ENCODE measurements at regions of chr22 and their contacts with region 1.

Region 1: GRCh38 chr22:31970490-31971444 is 26.4 kb downstream of the YWHAH start:
- DNase-seq: peak; percentile 77 to 93 (median 92)
- ATAC-seq: peak; percentile 95
- H3K4me3 ChIP-seq: peak overlapping the region; percentile 21
- H3K27ac ChIP-seq: no peak overlapping the region
- H3K4me1 ChIP-seq: no peaks in the 10 kb centered on the region
- H3K27me3 ChIP-seq: no peaks in the 10 kb centered on the region

Region 2: DNA sequence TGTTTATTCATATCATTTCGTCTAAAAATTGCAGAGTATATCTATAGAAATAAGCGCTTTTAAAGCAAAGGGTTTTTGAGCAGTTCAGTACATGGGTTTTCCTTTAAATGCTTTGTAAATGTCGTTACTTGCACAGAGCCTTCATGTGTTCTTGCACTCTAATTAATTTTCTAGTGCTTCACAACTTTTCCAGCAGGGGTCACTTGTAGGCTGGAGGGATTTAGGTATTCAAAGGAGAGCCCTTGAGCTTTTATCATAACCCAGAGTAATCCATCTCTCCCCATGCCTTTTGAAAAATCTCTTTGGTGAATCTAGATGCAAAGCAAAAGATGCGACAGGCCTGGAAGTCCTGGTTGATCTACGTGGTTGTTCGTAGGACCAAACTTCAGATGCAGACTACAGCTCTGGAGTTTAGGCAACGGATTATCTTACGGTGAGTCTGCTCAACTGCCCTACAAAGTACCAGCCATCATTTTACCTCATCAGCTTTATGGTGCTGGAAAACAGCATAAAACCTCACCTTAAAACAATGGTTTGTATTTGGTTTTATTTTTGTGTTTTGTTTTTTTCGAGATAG is 414.1 kb before region 1 on chr22:
- intact Hi-C with region 1: loop called in 1 of 4 experiments (anchors 10 kb)
- DNase-seq: no peak
- ATAC-seq: peak; percentile 40 to 41
- H3K4me3 ChIP-seq: no peak overlapping the region
- H3K27ac ChIP-seq: no peak overlapping the region
- H3K4me1 ChIP-seq: no peaks in the 10 kb centered on the region
- H3K27me3 ChIP-seq: no peaks in the 10 kb centered on the region

Region 3: DNA sequence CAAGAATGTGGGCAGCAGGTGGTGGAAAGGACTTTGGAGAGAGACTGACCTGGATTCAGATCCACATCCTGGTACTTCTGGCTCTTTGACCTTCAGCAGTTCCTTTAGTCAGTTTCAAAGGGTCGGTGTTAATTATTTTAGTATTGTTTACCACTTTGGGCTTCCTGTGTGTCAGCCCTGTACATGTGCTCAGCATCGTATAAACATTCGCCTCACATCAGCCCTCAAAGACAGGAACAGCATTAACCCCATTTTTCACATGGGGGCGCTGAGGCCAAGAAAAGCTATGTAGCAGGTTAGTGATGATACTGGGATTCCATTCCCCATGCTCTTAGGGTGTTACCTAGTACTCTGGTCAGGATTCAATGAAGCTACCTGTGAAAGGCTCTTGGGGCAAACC is 98.6 kb before region 1 on chr22:
- intact Hi-C with region 1: loop called in 2 of 4 experiments (anchors 5 to 10 kb)
- DNase-seq: no peak
- ATAC-seq: peak in 1 of 2 donors; percentile 26
- H3K4me3 ChIP-seq: no peak overlapping the region
- H3K27ac ChIP-seq: no peak overlapping the region
- H3K4me1 ChIP-seq: no peaks in the 10 kb centered on the region
- H3K27me3 ChIP-seq: no peaks in the 10 kb centered on the region

Region 4: GRCh38 chr22:32080904-32081303 is 110.1 kb after region 1 on chr22:
- intact Hi-C with region 1: loop called (anchors 5 to 10 kb)
- DNase-seq: no peak
- ATAC-seq: peak; percentile 35 to 49
- H3K4me3 ChIP-seq: no peak overlapping the region
- H3K27ac ChIP-seq: no peak overlapping the region
- H3K4me1 ChIP-seq: peaks cover 5% of the 10 kb centered on the region
- H3K27me3 ChIP-seq: no peaks in the 10 kb centered on the region

Region 5: DNA sequence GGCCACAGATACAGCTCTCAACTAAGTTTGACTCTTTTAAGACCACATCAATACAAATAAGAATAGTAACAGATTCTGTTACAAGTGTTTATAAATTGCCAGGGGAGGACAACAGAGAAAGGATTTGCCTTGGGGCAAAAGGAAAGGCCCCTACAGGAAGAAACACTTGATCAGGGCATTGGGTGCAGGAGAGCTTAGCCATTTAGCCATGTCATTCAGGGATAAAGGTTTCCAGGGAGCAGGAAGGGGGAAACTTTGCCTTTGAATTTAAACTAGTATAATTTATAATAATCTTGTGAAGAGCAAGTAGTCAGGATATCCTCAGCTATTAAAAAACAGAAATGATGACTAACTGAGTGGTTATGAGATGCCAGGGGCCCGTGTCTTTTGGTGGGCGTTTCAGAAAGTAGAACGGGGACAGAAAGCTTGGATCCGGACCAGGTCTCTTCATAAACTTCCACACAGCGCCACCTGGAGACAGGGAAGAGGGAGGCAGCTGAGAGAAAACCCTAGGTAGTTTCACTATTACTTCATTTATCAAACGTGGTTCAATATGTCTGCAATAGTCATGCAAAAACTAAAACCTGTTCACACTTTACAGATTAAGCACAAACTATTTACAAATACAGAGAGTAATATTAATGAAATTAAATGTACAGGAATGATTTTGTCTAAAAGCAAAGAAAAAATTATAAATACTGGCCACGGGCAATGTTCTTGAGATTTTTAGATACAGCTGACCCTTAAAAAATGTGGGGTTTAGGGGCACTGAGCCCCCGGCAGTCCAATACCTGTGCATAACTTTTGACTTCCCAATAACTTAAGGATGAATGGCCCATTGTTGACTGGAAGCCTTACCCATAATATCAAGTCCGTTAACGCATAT is 295.4 kb after region 1 on chr22:
- intact Hi-C with region 1: loop called in 3 of 4 experiments (anchors 5 to 10 kb)
- DNase-seq: peak; percentile 66 to 83 (median 72)
- ATAC-seq: peak; percentile 36 to 74
- H3K4me3 ChIP-seq: no peak overlapping the region
- H3K27ac ChIP-seq: no peak overlapping the region
- H3K4me1 ChIP-seq: no peaks in the 10 kb centered on the region
- H3K27me3 ChIP-seq: no peaks in the 10 kb centered on the region

Region 6: DNA sequence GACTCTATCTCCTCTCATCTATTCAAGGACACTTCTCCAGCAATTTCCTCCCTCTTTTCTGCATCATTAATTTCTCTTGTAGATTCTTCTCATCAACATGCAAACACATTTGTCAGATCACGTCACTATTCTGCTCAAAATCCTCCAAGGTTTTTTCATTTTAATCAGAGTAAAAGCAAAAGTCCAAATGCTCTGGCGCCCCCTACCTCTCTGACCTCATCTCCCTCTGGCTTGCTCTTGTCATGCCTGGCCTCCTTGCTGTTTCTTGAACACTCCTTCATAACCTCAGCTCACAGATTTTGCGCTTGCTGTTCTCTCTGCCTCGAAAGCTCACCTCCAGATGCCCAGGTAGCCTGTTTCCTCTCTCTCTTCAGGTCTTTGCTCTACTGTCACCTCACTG is 418.9 kb after region 1 on chr22:
- intact Hi-C with region 1: loop called in 1 of 4 experiments (anchors 10 kb)
- DNase-seq: no peak
- ATAC-seq: no peak
- H3K4me3 ChIP-seq: no peak overlapping the region
- H3K27ac ChIP-seq: no peak overlapping the region
- H3K4me1 ChIP-seq: no peaks in the 10 kb centered on the region
- H3K27me3 ChIP-seq: no peaks in the 10 kb centered on the region

Measured in right cardiac atrium (tissue), 5 donors.